ENCODE measurements at regions of chr1 and their contacts with region 1.

Region 1: DNA sequence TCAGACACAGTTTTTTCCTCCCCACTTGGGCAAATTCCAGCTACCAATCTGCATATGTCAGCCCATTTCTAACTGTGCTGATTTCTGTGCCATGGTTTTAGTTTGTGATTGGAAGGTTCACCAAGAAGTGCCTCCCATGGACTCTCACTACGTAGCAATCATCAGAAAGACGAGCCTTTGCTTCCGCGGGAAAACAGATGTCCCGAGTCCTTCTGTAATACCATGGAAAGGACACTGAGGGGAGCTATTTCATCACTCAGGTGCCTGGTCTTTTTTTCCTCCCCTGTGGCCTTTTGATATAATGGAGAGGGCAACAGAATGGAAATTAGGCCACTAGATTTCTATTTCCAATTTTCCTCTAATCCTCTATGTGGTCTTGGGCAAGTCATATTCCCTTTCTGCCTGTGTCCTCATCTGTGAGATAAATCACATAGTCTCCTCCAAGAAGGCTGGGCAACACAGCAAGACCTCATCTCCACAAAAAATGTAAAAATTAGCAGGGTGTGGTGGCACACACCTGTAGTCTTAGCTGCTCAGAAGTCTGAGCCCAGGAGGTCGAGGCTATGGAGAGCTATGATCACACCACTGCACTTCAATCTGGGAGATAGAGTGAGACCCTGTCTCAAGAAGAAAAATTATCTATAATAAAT is 24.8 kb downstream of the LEMD1 start:
- DNase-seq: no peak

Region 2: GRCh38 chr1:205430696-205431305 is 33.7 kb after region 1 on chr1:
- intact Hi-C with region 1: loop called (anchors 2 kb)
- DNase-seq: peak; percentile 74

Region 3: GRCh38 chr1:205485338-205486228 is 88.5 kb after region 1 on chr1:
- intact Hi-C with region 1: loop called (anchors 1 kb)
- DNase-seq: no peak

Region 4: GRCh38 chr1:205523891-205524793 is 127.0 kb after region 1 on chr1:
- intact Hi-C with region 1: loop called (anchors 2 kb)
- DNase-seq: no peak

Measured in cardiac septum (tissue), 1 donor.